ENCODE measurements at regions of chr9 and their contacts with region 1.

Region 1: GRCh38 chr9:6681147-6681956 is 35.8 kb upstream of the GLDC start:
- DNase-seq: peak; percentile 91 to 93
- H3K4me3 ChIP-seq: peak overlapping the region; percentile 81 to 87 (median 85)
- H3K27ac ChIP-seq: peak overlapping the region; percentile 99
- H3K4me1 ChIP-seq: peaks cover 0 to 3% (median 0%) of the 10 kb centered on the region in 4 experiments; a peak in 2 of 7 replicates
- H3K27me3 ChIP-seq: no peaks in the 10 kb centered on the region
- CTCF ChIP-seq: no peak
- EP300 ChIP-seq: 0 out of 3 replicates have a peak, but pooled peaks of 1 of the 2 experiments have one; percentile 40
- POLR2A ChIP-seq: peak; percentile 89 to 93
- RAD21 ChIP-seq: no peak; a peak in 1 of 4 replicates

Region 2: DNA sequence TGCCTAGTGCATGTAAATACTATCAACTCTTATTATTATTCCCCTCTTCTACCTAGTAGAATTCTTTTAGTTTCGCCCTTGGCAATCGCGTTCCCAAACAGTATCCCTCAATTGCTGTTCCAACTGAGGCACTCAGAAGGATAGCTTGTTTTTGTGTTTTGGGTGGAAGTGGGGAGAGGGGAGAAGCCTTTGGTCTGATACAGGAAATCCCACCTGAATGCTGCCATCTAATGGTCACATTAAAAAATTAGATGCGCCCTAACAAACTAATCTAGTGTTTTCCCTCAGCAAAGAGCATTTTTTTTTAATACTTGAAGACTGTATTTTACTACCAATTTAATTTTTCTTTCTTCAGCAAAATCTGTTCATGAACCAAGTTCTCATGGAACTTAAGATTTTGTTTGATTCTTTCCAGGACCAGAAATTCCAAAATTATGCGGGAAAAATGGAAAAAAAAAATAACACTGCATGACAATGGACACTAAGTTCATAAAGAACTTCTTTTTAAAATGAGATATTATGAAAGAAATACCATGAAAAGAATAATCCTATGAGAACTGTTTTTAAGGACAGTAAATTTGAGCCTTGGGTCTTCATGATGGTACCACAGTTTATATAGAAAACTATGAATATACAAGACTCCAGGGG is 13.6 kb before region 1 on chr9:
- CTCF ChIA-PET with region 1: interaction called, 26 read pairs
- POLR2A ChIA-PET with region 1: interaction called, 8 read pairs
- DNase-seq: no peak
- H3K4me3 ChIP-seq: no peak overlapping the region
- H3K27ac ChIP-seq: no peak overlapping the region
- H3K4me1 ChIP-seq: no peaks in the 10 kb centered on the region
- H3K27me3 ChIP-seq: no peaks in the 10 kb centered on the region
- CTCF ChIP-seq: peak in 2 of 3 experiments; percentile 33 to 59; a peak in 2 of 4 replicates
- EP300 ChIP-seq: no peak
- POLR2A ChIP-seq: no peak
- RAD21 ChIP-seq: peak; percentile 63 to 66

Region 3: GRCh38 chr9:6692881-6693361 is 11.6 kb after region 1 on chr9:
- CTCF ChIA-PET with region 1: interaction called, 4 read pairs
- POLR2A ChIA-PET with region 1: interaction called, 21 read pairs
- DNase-seq: no peak
- H3K4me3 ChIP-seq: peak overlapping the region in 1 of 4 experiments; percentile 41; a peak in 4 of 8 replicates
- H3K27ac ChIP-seq: peak overlapping the region; percentile 65; the same call in 1 of the 2 replicates
- H3K4me1 ChIP-seq: peaks cover 4 to 9% (median 6%) of the 10 kb centered on the region in 4 experiments
- H3K27me3 ChIP-seq: no peaks in the 10 kb centered on the region
- CTCF ChIP-seq: no peak
- EP300 ChIP-seq: no peak
- POLR2A ChIP-seq: peak; percentile 69 to 81
- RAD21 ChIP-seq: no peak

Region 4: DNA sequence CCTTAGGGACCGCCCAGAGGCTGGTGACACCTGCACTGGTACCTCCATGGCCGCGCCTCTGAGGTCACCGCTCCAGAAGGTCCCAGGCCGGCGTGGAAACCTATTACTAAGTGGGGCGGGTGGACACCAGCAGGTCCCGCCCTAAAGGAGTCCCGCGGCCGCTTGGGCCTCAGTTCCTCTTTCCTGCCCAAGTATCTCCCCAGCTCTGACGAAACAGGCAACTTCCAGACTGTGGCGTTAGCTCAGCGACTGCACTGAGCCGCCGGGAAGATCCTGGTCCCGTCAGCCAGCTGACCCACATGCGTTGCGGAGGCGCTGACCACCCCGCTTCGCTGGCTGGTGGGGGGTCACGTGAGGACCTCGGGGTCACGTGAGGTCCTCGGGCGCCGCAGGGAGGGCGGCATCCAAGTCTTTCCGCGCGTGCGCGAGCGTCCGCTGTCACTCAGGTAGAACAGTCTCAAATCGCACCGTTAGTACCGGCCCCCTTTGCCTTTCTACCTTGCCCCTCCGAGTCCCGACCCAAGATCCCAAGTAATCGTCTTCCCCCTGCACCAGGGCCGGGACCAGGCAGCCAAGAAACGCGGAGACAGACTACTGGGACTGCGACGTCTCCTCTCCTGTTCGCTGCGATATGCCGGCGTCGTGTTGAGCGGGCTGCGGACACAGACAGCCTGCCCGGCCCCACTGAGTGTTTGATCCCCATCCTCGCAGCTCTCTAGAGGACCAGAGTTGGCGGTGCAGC is 22.7 kb after region 1 on chr9:
- CTCF ChIA-PET with region 1: interaction called, 3 read pairs
- POLR2A ChIA-PET with region 1: interaction called, 12 read pairs
- DNase-seq: peak; percentile 94
- H3K4me3 ChIP-seq: peak overlapping the region; percentile 48 to 68 (median 62)
- H3K27ac ChIP-seq: peak overlapping the region; percentile 85; the same call in 1 of the 2 replicates
- H3K4me1 ChIP-seq: peaks cover 0 to 6% (median 2%) of the 10 kb centered on the region in 4 experiments; a peak in 3 of 7 replicates
- H3K27me3 ChIP-seq: no peaks in the 10 kb centered on the region
- CTCF ChIP-seq: no peak; a peak in 1 of 4 replicates
- EP300 ChIP-seq: 0 out of 3 replicates have a peak, but pooled peaks of 1 of the 2 experiments have one; percentile 38
- POLR2A ChIP-seq: peak; percentile 92 to 94
- RAD21 ChIP-seq: no peak; a peak in 1 of 4 replicates

Region 5: DNA sequence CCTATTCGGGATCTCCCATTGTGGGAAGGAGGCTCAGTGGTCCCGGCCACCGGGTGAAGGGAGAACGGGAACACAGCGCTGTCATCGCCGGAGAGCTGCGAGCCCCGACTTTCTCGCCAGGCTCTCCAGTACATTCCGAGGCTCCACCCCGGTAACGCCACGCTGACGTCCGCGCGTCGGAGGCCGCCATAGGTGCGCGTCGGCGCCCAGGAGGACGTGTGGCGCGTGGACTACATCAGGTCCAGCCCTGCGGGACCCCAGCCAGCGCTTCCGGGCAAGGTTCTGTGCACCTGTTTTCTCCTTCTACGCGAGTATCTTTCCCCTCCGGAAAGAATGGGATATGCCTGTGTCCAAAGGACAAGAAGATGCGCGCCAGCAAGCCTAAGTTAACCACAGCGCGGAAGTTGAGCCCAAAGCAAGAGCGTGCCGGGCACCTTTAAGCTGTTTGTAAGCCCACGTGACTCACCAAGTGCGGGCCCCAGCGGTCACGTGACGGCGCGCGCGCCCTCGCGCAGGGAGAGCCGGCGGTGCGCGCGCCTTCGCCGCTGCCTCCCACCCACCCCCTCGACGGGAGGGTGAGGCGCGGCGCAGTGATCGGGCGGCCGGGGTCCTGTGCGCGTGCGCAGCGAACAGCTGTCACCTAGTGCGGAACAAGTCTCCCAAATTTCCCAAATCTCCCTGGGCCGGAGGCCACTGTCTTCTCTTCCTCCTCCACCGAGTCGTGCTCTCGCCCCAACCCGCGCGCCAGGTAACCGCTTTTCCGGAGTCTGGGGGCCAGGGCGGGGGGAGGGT is 76.3 kb after region 1 on chr9 and contains the start of gene KDM4C:
- CTCF ChIA-PET with region 1: no interaction called
- POLR2A ChIA-PET with region 1: interaction called, 12 read pairs
- DNase-seq: peak; percentile 87 to 97
- H3K4me3 ChIP-seq: peak within 1 kb of the TSS; percentile 71 to 91 (median 82)
- H3K27ac ChIP-seq: peak within 1 kb of the TSS; percentile 97
- H3K4me1 ChIP-seq: peaks cover 1 to 6% (median 4%) of the 10 kb centered on the region in 4 experiments; a peak in 5 of 7 replicates
- H3K27me3 ChIP-seq: no peaks in the 10 kb centered on the region
- CTCF ChIP-seq: no peak
- EP300 ChIP-seq: peak in 1 of 2 experiments; percentile 38; a peak in 1 of 3 replicates
- POLR2A ChIP-seq: peak; percentile 78 to 97
- RAD21 ChIP-seq: no peak
- total RNA-seq, gene KDM4C: 25.0 and 26.1 TPM in 2 replicates

Region 6: DNA sequence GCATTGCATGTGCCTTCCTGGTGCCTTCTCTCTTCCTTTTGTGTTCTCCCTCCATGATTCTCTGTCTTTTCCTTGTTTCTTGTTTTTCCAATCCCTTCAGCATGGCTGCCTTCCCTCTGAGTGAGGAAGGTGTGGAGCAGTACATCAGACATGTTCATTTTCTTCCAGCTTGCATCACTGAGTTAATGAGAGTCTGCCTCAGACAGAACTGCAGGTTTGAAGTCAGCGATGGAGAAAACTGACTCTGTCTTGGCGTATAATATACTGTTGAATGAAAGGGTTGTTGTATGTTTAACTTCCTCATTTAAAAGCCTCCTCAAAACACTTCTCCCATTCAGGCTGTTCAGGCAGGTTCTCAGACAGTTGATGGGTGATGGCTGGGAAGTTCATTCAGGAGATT is 205.7 kb after region 1 on chr9:
- CTCF ChIA-PET with region 1: no interaction called
- POLR2A ChIA-PET with region 1: no interaction called
- DNase-seq: no peak
- H3K4me3 ChIP-seq: no peak overlapping the region
- H3K27ac ChIP-seq: no peak overlapping the region
- H3K4me1 ChIP-seq: no peaks in the 10 kb centered on the region
- H3K27me3 ChIP-seq: no peaks in the 10 kb centered on the region
- CTCF ChIP-seq: no peak
- EP300 ChIP-seq: no peak
- POLR2A ChIP-seq: no peak
- RAD21 ChIP-seq: no peak